ENCODE measurements at regions of chr7 and their contacts with region 1.

Region 1: DNA sequence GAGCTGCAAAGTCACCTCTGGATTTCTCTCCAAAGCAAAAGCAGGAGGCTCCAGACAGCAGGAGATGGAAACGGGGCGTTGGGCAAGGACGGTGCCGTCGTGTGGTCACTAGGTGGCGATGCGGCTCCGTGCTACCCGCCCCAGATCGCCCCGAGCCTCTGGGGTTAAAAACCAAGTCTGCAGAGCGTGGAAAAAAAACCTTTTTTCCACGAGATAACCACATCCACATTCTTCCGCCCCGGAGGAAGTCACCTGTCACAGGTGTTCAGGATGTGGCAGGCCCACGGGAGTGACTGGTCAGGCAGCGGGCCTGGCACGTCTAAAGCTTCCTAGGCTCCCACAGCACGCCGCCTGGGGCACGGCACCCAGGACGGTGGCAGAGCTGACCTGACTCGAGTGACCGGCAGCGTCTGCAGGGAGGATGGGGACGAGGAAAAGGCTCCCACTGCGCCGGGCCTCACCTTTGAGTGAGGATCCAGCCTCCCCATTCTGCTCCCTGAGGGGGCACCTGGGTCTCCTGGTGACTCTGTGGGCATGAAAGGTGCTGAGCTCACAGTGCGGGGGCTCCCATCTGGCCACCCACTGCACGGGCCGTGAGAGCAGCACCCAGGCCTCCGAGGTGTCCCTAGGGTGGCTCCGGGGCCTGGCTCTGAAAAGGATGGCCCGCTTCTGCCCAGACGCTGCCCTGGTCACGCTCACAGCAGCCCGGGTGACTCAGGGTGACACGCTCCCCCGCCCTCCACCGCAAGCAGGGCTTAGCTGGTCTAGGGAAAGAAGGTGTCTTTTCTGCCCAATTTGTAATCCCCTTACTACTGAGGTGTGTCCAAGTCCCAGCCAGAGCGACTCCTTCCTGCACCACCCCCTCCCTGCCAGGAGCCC is 71.3 kb upstream of the TNRC18 start:
- DNase-seq: peak; percentile 87
- CTCF ChIP-seq: peak; percentile 95

Region 2: GRCh38 chr7:5396999-5397663 is 97.8 kb before region 1 on chr7:
- CTCF ChIA-PET with region 1: no interaction called
- POLR2A ChIA-PET with region 1: no interaction called
- DNase-seq: peak; percentile 93
- CTCF ChIP-seq: no peak

Region 3: GRCh38 chr7:5450549-5451372 is 44.2 kb before region 1 on chr7:
- CTCF ChIA-PET with region 1: no interaction called
- POLR2A ChIA-PET with region 1: no interaction called
- DNase-seq: peak; percentile 74
- CTCF ChIP-seq: peak; percentile 59

Region 4: DNA sequence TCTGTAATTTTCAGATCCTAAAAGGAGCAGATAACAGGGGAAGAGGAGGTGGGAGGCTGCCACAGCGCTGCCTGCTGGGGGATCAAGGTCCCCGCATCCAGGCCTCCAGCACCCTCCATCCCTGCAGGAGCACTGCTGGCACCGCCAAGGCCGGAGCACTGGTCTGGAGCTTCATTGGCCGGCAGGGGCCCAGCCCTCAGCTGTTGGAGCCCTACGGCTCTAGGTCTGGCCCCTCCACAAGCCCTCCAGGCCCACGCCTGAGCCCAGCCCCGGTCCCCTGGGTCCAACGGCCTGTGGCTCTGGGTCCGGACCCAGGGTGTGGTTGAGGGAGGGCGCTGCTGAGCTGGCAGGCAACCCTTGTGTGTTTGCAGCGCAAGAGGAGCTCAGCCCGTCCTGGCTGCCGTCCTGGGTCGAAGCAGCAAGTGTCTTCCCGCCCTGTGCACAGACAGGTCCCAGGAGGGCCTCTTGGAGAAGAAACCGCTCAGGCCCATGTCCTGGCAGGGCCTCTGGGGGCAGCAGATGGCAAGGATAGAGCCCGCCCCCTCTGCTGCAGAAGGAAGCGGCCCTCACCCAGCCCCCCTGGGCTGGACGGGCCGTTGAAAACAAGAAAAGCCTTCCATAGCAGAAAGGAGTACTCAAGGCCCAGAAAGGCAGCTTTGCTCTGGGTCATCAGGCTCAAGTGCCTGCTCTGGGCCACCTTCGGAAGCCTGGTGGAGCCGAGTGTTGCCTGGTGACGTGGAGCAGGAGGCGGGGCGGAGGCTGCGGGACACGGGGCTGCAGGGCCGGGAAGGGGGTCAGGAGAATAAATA is 17.0 kb before region 1 on chr7:
- CTCF ChIA-PET with region 1: interaction called, 12 read pairs
- POLR2A ChIA-PET with region 1: no interaction called
- DNase-seq: peak; percentile 72
- CTCF ChIP-seq: peak; percentile 5

Region 5: GRCh38 chr7:5519515-5519928 is 24.6 kb after region 1 on chr7:
- CTCF ChIA-PET with region 1: interaction called, 14 read pairs
- POLR2A ChIA-PET with region 1: interaction called, 4 read pairs
- DNase-seq: no peak
- CTCF ChIP-seq: no peak

Region 6: GRCh38 chr7:5541087-5541992 is 46.4 kb after region 1 on chr7:
- CTCF ChIA-PET with region 1: interaction called, 12 read pairs
- POLR2A ChIA-PET with region 1: interaction called, 3 read pairs
- DNase-seq: no peak
- CTCF ChIP-seq: no peak

Region 7: GRCh38 chr7:5694912-5695726 is 200.2 kb after region 1 on chr7:
- CTCF ChIA-PET with region 1: interaction called, 22 read pairs
- POLR2A ChIA-PET with region 1: no interaction called
- DNase-seq: peak; percentile 62
- CTCF ChIP-seq: no peak